Activated CD4-positive, alpha-beta T cell treated with anti-CD3 and anti-CD28 coated beads, Interleukin-2, amount 10 ng/mL, durations not matched to agents 24 days and 14 days (primary cell): ENCODE measurements at regions of chr12 and their contacts with region 1.

Region 1: GRCh38 chr12:100668945-100669536 is 95.6 kb downstream of the GAS2L3 start:
- DNase-seq: peak; percentile 85
- H3K4me3 Mint-ChIP-seq: no peak overlapping the region
- H3K27ac Mint-ChIP-seq: no peak overlapping the region
- H3K4me1 Mint-ChIP-seq: no peaks in the 10 kb centered on the region
- H3K27me3 Mint-ChIP-seq: no peaks in the 10 kb centered on the region

Region 2: DNA sequence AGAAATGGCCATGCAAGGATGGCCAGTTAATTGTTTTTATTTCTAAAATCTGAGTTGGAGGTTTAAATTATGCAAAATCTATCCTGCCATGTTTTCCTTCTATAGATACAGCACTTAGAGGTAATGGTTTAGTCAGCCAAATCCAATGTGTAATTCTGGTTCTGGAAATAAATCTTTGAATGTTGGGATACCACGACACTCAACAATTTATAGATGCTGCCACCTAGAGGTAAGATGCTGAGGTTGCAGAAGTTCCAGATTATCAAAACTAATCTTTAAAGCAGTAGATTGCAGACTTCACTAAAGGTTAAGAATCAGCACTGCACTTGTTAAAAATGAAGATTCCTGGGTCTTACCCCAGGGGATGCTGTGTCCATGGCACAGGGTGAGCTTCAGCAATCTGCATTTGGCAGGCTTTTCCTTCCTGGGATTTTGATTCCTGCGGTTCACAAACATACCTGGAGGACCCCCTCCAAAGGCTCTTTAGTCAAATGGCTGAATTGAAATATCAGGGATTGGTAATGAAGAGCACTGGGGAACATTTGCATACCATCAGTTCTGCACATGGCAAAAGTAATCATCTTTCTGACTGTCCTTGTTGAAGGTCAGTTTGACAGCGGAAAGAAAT is 72.2 kb after region 1 on chr12:
- intact Hi-C with region 1: loop called (anchors 5 kb)
- DNase-seq: peak; percentile 59
- H3K4me3 Mint-ChIP-seq: no peak overlapping the region
- H3K27ac Mint-ChIP-seq: no peak overlapping the region
- H3K4me1 Mint-ChIP-seq: no peaks in the 10 kb centered on the region
- H3K27me3 Mint-ChIP-seq: no peaks in the 10 kb centered on the region